Sigmoid colon (tissue), 7 donors: ENCODE measurements at regions of chr17 and their contacts with region 1.

Region 1: DNA sequence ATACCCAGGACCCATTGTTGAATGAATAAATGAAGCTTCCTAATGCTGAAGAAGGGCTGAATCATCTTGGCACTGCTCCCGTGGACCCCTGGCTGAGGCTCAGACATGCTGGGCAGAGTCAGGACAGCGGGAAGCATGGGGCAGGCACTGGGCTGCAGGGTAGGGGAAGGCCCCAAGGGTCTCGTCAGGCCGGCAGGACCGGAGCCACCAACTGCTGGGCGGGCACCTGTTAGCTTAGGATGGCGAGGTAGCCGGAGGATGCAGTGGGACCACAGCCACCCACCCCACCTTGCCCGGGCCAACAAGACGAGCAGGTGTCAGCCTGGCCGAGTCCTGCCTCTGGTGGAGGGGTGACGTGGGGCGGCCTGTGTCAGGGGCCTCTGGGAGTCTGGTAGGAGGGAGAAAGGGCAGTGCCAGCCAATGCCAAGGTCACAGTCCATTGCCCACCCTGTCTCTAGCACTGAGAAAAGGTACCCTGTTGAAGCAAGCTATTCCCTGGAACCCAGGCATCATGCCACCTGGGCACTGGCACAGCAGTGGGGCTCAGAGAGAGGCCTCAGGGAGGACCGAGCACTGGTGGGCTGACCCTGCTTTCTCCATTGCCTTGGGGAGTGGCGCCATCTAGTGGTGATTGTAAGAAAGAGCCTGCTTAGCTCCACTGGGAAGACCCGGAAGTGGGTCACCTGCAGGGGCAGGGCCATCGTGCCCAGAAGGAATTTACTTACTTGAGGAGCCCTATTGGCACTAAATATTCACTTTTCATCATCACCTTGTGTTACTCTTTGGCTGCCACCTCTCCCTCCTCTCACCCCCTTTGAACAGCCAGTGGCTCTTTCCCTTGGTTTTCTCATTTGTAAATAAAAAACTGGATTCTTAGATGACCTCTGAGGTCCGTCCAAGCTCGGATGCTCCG is 3.0 kb upstream of the DLX3 start:
- DNase-seq: peak; percentile 85
- H3K4me3 ChIP-seq: no peak overlapping the region
- H3K27ac ChIP-seq: no peak overlapping the region
- H3K4me1 ChIP-seq: peaks cover 0 to 36% (median 35%) of the 10 kb centered on the region in 4 donors
- H3K27me3 ChIP-seq: peaks cover 39 to 94% (median 74%) of the 10 kb centered on the region in 3 donors
- CTCF ChIP-seq: peak; percentile 80 to 93 (median 90)
- EP300 ChIP-seq: no peak
- POLR2A ChIP-seq: no peak

Region 2: DNA sequence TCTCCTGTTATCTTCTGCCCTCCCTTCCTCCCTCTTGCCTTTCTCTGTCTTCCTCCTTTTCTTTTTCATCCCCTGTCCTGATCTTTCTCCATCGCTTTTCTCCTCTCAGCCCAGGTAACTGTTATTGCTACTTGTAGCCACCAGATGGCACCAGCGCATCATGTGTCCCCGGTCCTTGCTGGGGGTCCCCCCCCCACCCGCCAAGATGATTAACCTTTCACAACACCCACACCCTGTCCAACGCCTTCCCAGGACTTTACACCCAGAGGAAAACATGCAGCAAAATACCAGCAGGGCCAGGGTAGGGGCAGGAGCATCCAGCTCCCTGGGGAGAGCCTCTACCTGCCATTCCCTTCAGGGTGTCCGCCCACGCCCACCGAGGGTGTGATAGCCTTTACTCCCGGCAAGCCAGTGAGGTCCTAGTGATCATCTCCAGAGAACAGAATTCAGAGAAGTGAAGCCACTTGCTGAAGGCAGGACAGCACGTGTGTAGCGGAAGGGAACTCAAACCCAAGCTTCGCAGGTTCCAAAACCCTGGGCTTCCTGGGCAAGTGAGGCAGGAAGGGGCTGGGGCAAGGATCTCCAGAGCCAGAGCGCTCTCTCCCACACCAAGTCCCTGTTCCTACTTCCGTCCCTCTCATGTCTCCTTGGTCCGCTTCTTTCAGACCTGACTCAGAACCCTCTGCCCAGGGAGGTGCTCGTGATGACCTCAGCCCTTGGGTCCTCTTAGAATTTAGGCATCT is 136.7 kb before region 1 on chr17:
- intact Hi-C with region 1: loop called (anchors 1 kb)
- DNase-seq: no peak
- H3K4me3 ChIP-seq: no peak overlapping the region
- H3K27ac ChIP-seq: no peak overlapping the region
- H3K4me1 ChIP-seq: no peaks in the 10 kb centered on the region
- H3K27me3 ChIP-seq: no peaks in the 10 kb centered on the region
- CTCF ChIP-seq: peak; percentile 33 to 96 (median 84)
- EP300 ChIP-seq: no peak
- POLR2A ChIP-seq: no peak

Region 3: DNA sequence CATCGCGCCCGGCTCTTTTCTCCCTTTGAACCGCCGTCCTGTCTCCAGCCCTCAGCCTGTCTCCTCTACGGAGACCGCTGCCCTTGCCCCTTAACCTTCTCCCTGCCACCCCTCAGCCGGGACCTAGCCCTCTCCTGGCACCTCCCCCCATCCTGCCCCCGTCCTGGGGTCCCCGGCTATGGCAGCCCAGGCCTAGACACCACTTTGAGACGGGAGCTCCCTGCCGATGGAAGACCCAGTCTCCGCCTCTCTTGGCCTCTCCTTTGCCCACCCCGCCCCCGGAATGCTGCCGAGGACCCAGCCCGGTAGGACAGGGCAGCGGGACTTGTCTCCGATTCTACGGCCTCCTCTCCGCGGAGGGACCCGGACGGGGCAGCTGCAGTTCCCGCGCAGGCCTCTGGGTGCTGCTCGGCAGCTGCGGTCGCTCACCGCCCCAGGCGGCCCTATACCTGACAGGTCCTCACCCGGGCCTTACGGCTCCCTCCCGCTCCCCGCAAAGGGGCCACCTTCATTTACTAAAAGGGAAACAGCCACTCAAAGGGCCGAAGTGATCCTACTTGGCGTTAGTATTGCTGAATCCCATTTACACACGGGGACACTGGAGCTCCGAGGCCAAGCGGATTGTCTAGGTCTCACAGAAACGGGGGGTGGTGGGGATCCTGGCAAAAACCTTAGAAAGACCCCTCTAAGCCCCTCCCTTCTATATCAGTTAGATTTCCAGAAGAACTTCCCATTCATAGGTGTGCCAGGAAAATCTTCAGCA is 117.6 kb before region 1 on chr17:
- intact Hi-C with region 1: loop called (anchors 1 kb)
- DNase-seq: peak; percentile 82
- H3K4me3 ChIP-seq: no peak overlapping the region
- H3K27ac ChIP-seq: no peak overlapping the region
- H3K4me1 ChIP-seq: peaks cover 0 to 10% (median 7%) of the 10 kb centered on the region in 4 donors
- H3K27me3 ChIP-seq: peaks cover 6 to 49% (median 29%) of the 10 kb centered on the region in 3 donors
- CTCF ChIP-seq: peak; percentile 71 to 99 (median 92)
- EP300 ChIP-seq: no peak
- POLR2A ChIP-seq: no peak

Region 4: GRCh38 chr17:49952209-49952911 is 45.7 kb before region 1 on chr17:
- intact Hi-C with region 1: loop called (anchors 1 kb)
- DNase-seq: peak; percentile 77
- H3K4me3 ChIP-seq: no peak overlapping the region
- H3K27ac ChIP-seq: no peak overlapping the region
- H3K4me1 ChIP-seq: no peaks in the 10 kb centered on the region
- H3K27me3 ChIP-seq: peaks cover 16 to 57% (median 36%) of the 10 kb centered on the region in 3 donors
- CTCF ChIP-seq: peak; percentile 28 to 72 (median 62)
- EP300 ChIP-seq: no peak
- POLR2A ChIP-seq: no peak

Region 5: DNA sequence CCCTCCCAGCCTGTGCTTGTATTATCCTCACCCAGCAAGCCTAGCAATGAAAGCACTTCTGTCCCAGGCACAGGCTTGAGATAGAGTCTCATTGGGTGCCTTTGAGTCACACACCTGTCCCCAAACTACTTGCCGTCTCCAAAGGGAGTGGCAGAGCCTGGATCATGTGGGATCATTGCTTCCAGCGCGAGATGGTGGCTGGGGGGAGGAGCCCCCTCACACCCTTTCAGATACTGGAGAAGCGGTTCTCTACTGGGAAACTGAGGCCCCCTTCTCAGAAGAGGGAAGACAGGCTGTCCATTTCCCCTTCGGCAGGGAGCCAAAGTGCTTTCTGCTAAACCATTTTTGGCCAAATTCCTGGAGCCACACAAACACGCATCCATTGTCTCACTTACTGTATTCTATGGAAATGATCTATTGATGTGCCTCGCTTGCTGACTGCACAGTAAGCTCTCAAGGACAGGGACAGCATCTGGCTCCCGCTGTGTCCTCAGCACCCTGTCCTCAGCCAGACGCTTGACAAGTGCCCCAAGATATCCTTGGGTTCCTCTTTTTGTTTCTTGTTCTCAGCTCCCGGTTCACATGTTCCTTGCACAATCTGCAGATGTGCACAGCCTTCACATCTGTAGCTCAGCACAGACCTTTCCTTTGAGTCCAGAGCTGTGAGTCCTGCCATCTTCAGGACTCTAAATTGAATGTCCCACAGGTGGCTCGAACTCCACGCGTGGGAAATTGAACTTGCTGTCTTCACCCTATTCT is 23.0 kb after region 1 on chr17:
- intact Hi-C with region 1: no loop called
- DNase-seq: no peak
- H3K4me3 ChIP-seq: no peak overlapping the region
- H3K27ac ChIP-seq: no peak overlapping the region
- H3K4me1 ChIP-seq: no peaks in the 10 kb centered on the region
- H3K27me3 ChIP-seq: no peaks in the 10 kb centered on the region
- CTCF ChIP-seq: no peak
- EP300 ChIP-seq: no peak
- POLR2A ChIP-seq: no peak